Psoas muscle (tissue), 8 donors: ENCODE measurements at regions of chr2 and their contacts with region 1.

Region 1: DNA sequence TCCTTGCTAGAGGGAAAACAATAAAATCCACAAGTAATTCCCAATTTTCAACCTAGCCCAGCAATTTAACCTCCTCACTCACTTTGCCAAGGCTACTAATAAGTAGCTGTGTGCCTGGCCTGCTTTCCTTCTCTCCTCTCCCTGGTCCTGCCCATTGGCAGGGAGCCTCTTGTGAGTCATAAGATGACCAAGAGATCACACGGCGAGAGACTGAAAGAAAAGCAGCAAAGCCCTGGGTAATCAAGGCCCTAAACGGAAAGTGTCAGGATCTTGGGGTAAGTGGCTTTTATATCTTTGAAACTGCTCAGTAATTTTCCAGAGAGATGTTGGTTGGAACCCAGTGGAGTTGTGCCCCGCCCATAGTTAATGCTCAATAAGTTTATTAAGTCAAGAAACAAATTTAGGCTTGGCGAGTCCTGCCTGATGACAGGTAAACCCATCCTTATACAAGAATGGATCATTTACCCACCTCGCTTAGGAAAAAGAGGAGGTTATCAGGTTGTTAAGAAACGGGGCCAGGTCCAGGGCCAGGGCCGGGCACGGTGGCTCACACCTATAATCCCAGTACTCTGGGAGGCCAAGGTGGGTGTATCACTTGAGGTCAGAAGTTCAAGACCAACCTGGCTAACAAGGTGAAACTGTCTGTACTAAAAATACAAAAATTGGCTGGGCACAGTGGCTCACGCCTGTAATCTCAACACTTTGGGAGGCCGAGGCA is 10.0 kb upstream of the ADAM17 start:
- DNase-seq: peak; percentile 75 to 84
- ATAC-seq: peak; percentile 96 to 99 (median 98)
- H3K4me3 ChIP-seq: peak overlapping the region; percentile 52
- H3K27ac ChIP-seq: peak overlapping the region; percentile 86
- H3K4me1 ChIP-seq: peaks cover 8% of the 10 kb centered on the region
- H3K27me3 ChIP-seq: no peaks in the 10 kb centered on the region
- CTCF ChIP-seq: no peak

Region 2: DNA sequence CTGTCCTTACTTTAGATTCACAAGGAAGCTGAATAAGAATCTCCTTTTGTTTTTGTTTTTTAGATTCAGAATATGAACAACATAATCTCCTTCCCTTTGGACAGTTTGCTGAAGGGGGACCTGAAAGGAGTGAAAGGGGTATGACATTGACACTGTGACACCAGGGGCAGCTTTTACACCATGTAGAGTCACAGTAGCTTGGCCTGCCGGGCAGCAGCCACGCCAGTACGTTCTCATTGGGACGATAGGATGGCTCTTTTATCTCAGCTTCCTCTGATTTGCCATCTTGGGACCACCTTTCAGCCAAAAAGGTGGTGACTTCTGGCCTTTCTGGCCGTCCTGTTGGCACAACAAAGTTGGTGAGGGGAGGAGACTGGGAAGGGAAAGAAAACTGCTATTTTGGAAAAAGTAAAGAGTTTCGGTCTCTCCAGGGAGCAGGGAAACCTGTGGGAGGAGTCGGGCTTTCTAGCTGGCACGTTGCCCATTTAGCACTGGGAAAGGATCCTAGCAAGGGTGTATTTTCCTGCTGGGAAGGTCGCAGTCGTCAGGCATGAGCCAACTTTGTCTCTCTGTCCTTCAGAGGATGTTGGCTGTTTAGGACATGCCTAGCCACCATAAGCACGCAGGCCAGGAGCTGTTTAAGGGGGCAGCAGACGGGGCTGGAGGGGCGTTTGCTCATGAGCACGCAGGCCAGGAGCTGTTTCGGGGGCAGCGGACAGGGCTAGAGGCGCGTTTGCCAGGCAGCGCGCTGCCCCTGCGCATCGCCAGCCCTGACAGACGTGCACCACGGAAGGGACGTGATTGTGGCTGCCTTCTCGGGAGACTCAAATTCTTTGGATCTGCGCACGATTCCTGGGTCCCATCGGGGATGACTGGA is 246.9 kb before region 1 on chr2:
- intact Hi-C with region 1: no loop called
- DNase-seq: peak; percentile 52 to 67
- ATAC-seq: peak in 2 of 4 donors; percentile 13 to 36
- H3K4me3 ChIP-seq: no peak overlapping the region
- H3K27ac ChIP-seq: no peak overlapping the region
- H3K4me1 ChIP-seq: no peaks in the 10 kb centered on the region
- H3K27me3 ChIP-seq: no peaks in the 10 kb centered on the region
- CTCF ChIP-seq: no peak

Region 3: DNA sequence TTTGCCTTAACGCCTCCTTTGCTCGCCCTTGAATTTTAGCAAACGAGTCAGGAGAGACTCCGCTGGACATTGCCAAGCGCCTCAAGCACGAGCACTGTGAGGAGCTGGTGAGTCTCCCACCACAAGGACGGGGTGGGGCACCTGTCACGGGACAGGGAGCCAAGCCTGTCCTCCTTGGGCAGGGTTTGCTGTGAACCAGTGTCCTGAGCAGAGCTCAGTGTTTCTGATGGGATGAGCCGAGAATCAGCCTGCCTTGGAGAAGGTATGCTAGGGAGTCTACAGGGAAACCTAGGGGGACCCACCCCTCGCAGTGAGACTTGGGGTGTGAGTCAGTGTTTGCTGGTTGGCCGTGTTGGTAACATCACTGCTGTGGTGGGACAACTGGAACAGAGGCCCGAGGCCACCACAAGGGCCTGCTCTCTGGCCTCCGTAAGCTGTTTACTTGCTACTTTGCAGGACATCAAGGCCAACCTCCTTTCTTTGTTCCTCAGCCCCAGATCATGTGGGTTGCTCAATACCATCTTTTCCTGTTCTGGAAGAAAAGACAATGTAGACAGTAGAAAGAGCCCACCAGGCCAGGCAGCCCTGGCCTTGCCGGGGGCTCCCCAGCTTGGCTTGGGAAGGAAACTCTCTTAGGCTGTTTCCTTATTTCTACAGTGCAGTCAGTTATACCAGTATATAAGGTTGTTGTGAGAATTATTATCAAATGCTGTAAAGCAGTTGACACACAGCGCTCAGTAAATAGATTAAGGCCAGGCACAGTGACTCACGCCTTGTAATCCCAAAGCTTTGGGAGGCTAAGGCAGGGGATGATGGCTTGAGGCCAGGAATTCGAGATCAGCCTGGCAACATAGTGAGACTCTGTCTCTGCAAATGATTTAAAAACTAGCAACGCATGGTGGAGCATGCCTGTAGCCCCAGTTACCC is 184.6 kb before region 1 on chr2:
- intact Hi-C with region 1: no loop called
- DNase-seq: peak; percentile 64 to 82
- ATAC-seq: peak in 3 of 4 donors; percentile 49 to 73 (median 54)
- H3K4me3 ChIP-seq: no peak overlapping the region
- H3K27ac ChIP-seq: peak overlapping the region; percentile 20
- H3K4me1 ChIP-seq: peaks cover 1% of the 10 kb centered on the region
- H3K27me3 ChIP-seq: no peaks in the 10 kb centered on the region
- CTCF ChIP-seq: no peak

Region 4: DNA sequence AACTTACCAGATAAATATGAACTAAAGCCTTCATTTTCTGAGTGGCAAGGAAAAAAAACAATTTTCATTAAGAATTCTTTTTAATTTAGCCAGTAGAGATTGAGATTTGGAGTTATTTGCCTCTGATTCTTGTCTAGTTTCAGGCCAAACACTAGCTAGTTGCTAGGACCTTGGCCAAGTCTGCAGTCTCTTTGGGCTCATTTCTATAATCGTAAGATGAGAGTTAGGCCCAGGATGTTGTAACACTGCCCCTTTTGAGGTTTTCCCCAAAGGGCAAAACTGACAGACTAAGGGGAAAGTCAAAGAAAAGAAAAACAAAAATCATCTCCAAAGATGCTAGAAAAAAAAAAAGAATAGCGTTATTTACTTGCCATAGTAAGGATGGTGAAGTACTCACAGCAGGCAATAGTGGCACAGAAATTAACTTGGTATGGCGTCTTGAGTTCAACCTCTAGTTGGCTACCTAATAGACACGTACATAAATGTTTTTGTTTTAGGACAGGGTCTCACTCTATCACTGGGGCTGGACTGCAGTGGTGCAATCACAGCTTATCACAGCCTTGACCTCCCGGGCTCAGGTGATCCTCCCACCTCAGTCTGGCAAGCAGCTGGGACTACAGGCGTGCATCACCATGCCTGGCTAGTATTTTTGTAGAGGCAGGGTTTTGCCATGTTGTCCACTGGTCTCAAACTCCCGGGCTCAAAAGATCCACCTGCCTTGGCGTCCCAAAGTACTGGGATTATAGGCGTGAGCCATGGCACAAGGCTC is 13.1 kb after region 1 on chr2:
- intact Hi-C with region 1: loop called in 1 of 2 experiments (anchors 1 kb)
- DNase-seq: no peak
- ATAC-seq: peak in 2 of 4 donors; percentile 21 to 25
- H3K4me3 ChIP-seq: no peak overlapping the region
- H3K27ac ChIP-seq: no peak overlapping the region
- H3K4me1 ChIP-seq: no peaks in the 10 kb centered on the region
- H3K27me3 ChIP-seq: no peaks in the 10 kb centered on the region
- CTCF ChIP-seq: no peak

Region 5: DNA sequence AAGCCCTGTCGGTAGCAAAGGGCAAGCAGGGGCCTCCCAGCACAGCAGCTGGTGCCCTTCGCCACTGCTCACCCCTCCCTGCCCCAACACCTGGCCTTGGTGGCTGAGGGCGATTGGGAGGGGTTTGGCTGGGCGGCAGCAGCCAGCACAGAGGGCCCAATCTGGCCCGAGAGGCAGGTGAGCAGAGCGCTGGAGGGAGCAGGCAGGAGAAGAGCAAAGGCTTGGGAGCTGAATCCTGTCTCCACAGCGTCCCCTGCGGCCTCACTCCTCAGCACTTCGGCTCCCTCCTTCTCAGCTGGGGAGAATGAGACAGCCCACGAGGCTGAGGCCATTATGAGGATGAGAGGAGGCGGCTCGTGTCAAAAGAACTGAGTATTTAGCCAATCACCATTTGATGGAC is 202.8 kb after region 1 on chr2:
- intact Hi-C with region 1: loop called in 1 of 2 experiments (anchors 10 kb)
- DNase-seq: no peak
- ATAC-seq: peak; percentile 43 to 76 (median 62)
- H3K4me3 ChIP-seq: no peak overlapping the region
- H3K27ac ChIP-seq: no peak overlapping the region
- H3K4me1 ChIP-seq: peaks cover 24% of the 10 kb centered on the region
- H3K27me3 ChIP-seq: no peaks in the 10 kb centered on the region
- CTCF ChIP-seq: peak; percentile 40